Activated CD4-positive, alpha-beta T cell treated with anti-CD3 and anti-CD28 coated beads for 36 hours (primary cell): ENCODE measurements at regions of chr15 and their contacts with region 1.

Region 1: DNA sequence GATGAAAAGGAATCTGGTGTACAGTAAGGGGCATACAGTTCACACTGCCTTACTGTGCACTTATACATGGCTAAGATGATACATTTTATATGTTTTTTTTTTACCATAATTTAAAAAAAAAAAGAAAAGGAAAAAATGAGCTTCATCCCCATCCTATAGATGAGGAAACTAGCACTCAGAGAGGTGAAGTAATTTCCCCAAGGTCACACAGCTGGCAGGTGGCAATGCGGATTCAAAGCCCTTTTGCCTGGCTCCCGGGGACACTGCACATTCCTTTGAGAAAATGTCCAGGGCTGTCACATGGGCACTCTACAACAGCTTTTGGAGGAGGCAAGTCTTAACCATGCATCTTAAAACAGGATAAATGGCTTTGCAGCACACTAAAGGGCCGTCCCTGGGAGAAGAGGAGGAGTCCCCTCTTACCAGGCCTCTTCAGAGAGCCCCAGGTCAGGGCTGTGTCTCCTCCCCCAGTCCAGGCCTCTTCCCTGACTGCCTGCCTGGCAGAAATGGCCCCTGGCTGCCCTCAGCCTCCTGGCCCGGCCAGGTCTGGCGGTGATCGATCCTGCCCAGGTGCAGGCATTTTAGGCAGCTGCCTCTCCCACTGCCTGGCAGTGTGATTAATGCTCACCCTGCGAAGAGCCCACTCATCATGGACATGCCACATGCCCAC is 95.1 kb upstream of the LINGO1 start:
- DNase-seq: no peak
- ATAC-seq: no peak
- H3K4me3 Mint-ChIP-seq: no peak overlapping the region
- H3K27ac Mint-ChIP-seq: no peak overlapping the region
- H3K4me1 Mint-ChIP-seq: no peaks in the 10 kb centered on the region
- H3K27me3 Mint-ChIP-seq: peaks cover 2% of the 10 kb centered on the region

Region 2: DNA sequence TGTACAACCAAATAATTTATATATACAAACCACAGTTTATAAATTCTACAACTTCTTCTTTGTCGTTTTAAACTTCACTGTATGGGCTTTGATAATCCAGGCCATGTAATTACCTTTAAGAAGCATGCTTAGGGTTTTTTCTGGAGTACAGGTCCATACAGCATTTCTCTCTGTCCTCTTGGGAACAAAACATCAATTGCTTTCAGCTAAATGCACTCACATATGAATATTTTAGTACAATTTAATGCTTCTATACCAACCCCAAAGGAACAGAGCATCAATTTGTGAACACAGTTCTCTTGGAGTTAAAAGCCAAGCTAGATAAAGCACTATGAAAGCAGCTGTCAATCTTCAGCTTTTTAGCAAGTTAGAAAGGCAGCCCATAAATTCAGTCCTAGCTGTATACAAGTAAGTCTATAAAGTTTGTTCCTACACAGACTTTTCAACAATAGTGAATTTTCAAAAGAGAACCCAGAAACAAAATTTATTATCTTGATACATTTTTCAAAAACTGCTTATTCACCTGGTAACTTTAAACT is 1482.6 kb before region 1 on chr15:
- CTCF ChIA-PET with region 1: no interaction called
- POLR2A ChIA-PET with region 1: no interaction called
- intact Hi-C with region 1: loop called in 1 of 2 experiments (anchors 5 kb)
- DNase-seq: no peak
- ATAC-seq: no peak
- H3K4me3 Mint-ChIP-seq: no peak overlapping the region
- H3K27ac Mint-ChIP-seq: no peak overlapping the region
- H3K4me1 Mint-ChIP-seq: no peaks in the 10 kb centered on the region
- H3K27me3 Mint-ChIP-seq: no peaks in the 10 kb centered on the region